RWPE1 (cell line): ENCODE measurements at regions of chr20 and their contacts with region 1.

Region 1: DNA sequence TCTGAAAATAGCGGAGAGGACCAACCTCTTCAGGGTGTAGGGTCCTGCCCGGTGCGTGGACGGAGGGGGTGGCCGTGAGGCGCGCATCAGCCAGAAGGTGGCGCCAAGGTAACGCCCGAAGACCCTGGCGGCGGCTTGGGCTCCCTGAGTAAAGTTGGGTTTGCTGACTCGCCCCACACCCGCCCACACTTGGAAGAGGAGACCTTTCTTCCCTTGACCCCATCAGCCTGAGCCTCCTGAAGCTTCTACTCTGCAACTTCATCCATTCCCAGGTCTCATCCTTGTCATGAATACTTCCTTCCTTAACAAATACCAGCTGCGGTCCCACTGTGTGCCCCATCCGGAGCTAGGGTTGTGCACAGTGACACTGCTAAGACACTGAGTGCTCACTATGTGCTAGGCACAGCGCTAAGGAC is 14.6 kb downstream of the CD40 start:
- DNase-seq: peak; percentile 89
- H3K27ac ChIP-seq: peak overlapping the region; percentile 23; the same call in 1 of the 2 replicates
- CTCF ChIP-seq: peak; percentile 99

Region 2: DNA sequence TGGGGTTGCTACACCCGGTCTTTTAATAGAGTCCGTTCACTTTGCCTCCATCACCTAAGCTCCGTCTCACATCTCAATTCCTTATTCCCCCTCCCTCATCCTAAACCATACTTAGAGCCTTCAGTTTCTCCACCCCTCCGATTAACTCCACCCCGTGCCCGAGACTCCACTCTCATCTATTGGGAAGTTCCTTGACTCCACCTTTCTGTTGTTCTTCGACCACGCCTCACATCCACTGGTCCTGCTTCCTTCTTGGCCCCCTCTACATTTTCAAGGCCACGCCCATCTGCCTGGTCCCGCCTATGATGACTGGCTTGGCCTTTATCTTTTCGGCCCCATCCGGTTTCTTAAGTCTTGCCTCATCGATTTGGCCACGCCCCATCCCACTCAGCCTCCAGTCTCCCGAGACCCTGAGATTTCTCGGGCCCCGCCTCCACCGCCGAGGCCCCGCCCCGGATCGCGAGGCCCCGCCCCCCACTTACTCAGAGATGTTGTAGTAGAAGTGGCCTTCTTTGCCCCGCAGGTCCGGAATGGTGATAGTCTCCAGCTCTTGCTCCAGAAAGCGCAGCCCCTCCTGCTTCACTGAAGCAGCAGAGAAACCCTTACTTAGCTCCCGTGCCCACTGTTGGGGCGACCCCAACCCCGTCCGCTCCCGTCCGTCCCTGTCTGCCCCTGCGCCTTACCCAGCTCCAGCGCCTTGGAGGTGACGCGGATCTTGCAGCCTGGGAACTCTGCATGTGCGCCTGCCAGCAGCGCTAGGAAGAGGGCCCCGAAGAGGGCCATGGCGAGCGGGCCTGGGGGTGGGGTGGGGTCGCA is 221.8 kb before region 1 on chr20:
- CTCF ChIA-PET with region 1: no interaction called
- POLR2A ChIA-PET with region 1: no interaction called
- DNase-seq: peak; percentile 99
- H3K27ac ChIP-seq: peak overlapping the region; percentile 79
- CTCF ChIP-seq: no peak

Region 3: GRCh38 chr20:46151936-46152335 is 19.2 kb after region 1 on chr20:
- CTCF ChIA-PET with region 1: interaction called, 10 read pairs
- POLR2A ChIA-PET with region 1: no interaction called
- DNase-seq: peak; percentile 39
- H3K27ac ChIP-seq: no peak overlapping the region
- CTCF ChIP-seq: peak; percentile 60

Region 4: GRCh38 chr20:46174469-46175128 is 41.9 kb after region 1 on chr20:
- CTCF ChIA-PET with region 1: interaction called, 39 read pairs
- POLR2A ChIA-PET with region 1: no interaction called
- DNase-seq: peak; percentile 82
- H3K27ac ChIP-seq: no peak overlapping the region
- CTCF ChIP-seq: no peak; the same call in 1 of the 2 replicates

Region 5: GRCh38 chr20:46179863-46180262 is 47.1 kb after region 1 on chr20:
- CTCF ChIA-PET with region 1: interaction called, 39 read pairs
- POLR2A ChIA-PET with region 1: no interaction called
- DNase-seq: no peak
- H3K27ac ChIP-seq: peak overlapping the region; percentile 4
- CTCF ChIP-seq: no peak

Region 6: DNA sequence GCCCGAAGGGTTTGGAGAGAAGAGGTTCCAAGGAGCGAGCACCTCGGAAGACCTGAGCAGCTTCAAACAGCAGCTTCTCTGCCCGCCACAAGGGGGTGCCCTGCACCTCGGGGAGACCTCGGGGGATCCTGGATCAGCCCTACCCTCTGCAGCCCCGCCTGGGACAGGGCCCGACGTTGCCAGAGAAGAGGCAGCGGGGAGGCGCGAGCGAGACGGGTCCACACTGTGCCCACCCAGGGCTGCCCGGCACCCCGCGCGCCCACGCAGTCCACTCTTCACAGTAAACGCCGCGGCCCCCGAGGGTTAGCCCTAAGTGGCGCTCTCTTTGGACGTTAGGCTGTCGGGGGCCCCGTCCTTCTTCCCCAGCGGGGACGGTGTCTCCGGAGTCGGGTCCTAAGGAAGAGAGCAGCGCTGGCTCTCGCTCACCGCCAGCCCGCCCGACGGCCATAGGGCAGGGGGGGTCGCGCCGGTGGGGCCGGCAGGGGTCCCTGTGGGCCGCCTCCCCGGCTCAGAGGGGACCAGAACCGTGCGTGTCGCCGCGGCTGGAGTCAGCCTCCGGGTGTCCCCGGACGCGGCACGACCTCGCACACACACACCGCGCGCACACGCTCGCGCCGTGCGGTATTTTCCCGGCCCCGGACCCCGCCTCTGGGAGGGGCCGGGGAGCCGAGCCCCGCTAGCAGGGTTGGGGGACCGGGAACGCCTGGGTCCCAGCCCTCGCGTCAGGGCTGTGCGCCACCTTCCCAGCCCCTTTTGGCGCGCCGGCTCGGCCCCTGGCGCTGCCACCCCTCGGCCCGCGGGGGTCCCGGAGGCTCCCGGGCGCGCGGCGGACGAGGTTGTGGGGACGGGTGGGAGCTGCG is 174.7 kb after region 1 on chr20:
- CTCF ChIA-PET with region 1: interaction called, 13 read pairs
- POLR2A ChIA-PET with region 1: no interaction called
- DNase-seq: peak; percentile 87
- H3K27ac ChIP-seq: no peak overlapping the region
- CTCF ChIP-seq: peak; percentile 95

Region 7: DNA sequence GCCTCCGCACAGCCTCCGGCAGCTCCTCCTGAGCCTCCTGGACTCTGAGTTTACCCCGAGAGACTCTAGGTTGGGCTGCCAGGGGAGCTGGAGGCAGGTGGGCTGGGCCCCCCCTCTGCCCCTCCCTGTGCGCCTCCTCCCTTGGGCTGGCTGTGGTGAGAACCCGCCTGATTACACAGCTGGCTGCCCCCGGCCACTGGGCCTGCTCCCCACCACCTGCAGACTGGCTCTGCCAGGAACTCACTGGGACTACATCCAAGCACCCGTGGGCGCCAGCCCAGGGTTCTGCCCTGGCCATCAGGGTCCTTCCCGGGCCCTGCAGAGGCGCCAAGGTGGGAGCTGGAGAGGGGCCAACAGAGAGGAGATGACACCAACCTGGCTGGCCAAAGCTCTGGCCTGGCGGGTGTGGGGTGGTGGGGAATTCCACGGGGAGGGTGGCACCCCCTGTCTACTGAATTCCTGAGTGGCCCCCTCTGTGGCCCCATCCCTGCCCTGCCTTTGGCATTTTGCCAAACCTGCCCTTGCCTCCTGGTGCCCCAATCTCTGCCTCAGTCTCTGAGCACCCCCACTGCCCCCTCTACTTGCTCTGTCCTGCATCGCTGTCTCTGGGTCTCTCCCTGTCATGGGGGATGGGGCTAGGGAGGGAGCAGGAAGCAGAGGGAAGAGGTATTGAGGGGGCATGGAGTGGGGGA is 197.5 kb after region 1 on chr20:
- CTCF ChIA-PET with region 1: interaction called, 16 read pairs
- POLR2A ChIA-PET with region 1: no interaction called
- DNase-seq: no peak
- H3K27ac ChIP-seq: peak overlapping the region; percentile 86
- CTCF ChIP-seq: no peak

Region 8: GRCh38 chr20:46406199-46406985 is 273.7 kb after region 1 on chr20 and contains the start of gene ELMO2:
- CTCF ChIA-PET with region 1: interaction called, 12 read pairs
- POLR2A ChIA-PET with region 1: no interaction called
- DNase-seq: peak; percentile 100
- H3K27ac ChIP-seq: peak within 1 kb of the TSS; percentile 79
- CTCF ChIP-seq: no peak